ENCODE measurements at regions of chr3 and their contacts with region 1.

Region 1: GRCh38 chr3:186617038-186617946 is 4.4 kb downstream of the AHSG start:
- DNase-seq: peak; percentile 94
- H3K4me3 Mint-ChIP-seq: peak overlapping the region; percentile 74
- H3K27ac Mint-ChIP-seq: peak overlapping the region; percentile 68
- H3K4me1 Mint-ChIP-seq: peaks cover 21% of the 10 kb centered on the region
- H3K27me3 Mint-ChIP-seq: peaks cover 30% of the 10 kb centered on the region

Region 2: DNA sequence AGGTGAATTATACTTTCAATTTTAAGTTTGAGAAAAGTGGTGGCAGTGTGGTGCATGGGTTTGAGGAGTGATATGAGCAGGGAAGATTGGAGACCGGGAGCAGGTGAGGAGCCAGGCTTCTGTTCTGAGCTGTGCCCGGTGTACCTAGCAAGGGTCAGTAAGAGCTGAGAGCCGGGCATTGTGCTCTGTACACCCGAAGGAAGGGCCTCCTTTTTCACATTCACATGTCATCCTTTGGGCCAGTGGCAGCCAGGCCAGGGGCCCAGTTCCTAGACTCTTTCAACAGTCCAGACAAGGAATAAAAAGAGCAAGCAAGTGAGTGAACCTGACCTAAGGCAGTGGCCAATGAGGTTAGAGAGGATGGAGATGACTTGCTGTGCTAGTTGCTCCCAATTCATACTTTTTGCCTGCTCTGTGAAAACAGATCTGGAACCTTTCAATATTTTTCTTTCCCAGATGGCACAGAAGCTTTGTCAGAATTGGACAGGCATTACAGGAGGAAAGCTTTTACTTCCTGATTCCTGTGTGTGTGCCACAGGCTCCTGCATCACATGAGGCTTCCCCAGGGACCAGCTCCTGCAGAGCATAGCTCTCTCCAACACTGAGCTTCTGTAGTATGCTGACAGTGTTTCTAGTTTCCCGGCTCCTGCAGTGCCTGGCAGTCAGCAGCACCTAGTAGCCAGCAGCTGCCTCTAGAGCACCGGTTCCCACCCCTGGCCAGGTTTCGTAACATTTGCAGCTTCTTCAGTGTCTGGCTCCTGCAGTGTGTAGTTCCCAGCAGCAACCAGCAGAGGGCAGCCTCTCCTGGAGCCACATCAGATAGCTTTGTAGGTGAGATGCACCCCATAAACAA is 674.2 kb before region 1 on chr3:
- intact Hi-C with region 1: loop called (anchors 5 kb)
- DNase-seq: peak; percentile 95
- H3K4me3 Mint-ChIP-seq: peak overlapping the region; percentile 31
- H3K27ac Mint-ChIP-seq: no peak overlapping the region
- H3K4me1 Mint-ChIP-seq: peaks cover 15% of the 10 kb centered on the region
- H3K27me3 Mint-ChIP-seq: peaks cover 12% of the 10 kb centered on the region

Region 3: GRCh38 chr3:186821429-186822367 is 204.4 kb after region 1 on chr3:
- intact Hi-C with region 1: loop called (anchors 1 kb)
- DNase-seq: peak; percentile 77
- H3K4me3 Mint-ChIP-seq: no peak overlapping the region
- H3K27ac Mint-ChIP-seq: no peak overlapping the region
- H3K4me1 Mint-ChIP-seq: peaks cover 21% of the 10 kb centered on the region
- H3K27me3 Mint-ChIP-seq: peaks cover 8% of the 10 kb centered on the region

Region 4: GRCh38 chr3:186839874-186840641 is 222.8 kb after region 1 on chr3:
- intact Hi-C with region 1: no loop called
- DNase-seq: no peak
- H3K4me3 Mint-ChIP-seq: no peak overlapping the region
- H3K27ac Mint-ChIP-seq: no peak overlapping the region
- H3K4me1 Mint-ChIP-seq: no peaks in the 10 kb centered on the region
- H3K27me3 Mint-ChIP-seq: peaks cover 17% of the 10 kb centered on the region

Region 5: GRCh38 chr3:186871403-186871924 is 254.2 kb after region 1 on chr3:
- intact Hi-C with region 1: no loop called
- DNase-seq: peak; percentile 60
- H3K4me3 Mint-ChIP-seq: peak overlapping the region; percentile 18
- H3K27ac Mint-ChIP-seq: peak overlapping the region; percentile 80
- H3K4me1 Mint-ChIP-seq: peaks cover 30% of the 10 kb centered on the region
- H3K27me3 Mint-ChIP-seq: no peaks in the 10 kb centered on the region